ENCODE measurements at regions of chr7 and their contacts with region 1.

Region 1: GRCh38 chr7:140397784-140398750 is at the start of gene SLC37A3:
- DNase-seq: peak; percentile 74
- H3K4me3 ChIP-seq: peak within 1 kb of the TSS; percentile 68 to 100 (median 86)
- H3K27ac ChIP-seq: peak within 1 kb of the TSS; percentile 60
- H3K4me1 ChIP-seq: peaks cover 18% of the 10 kb centered on the region
- H3K27me3 ChIP-seq: no peaks in the 10 kb centered on the region
- CTCF ChIP-seq: no peak
- POLR2A ChIP-seq: peak; percentile 82
- total RNA-seq, gene SLC37A3: 32.7 and 35.3 TPM in 2 replicates

Region 2: GRCh38 chr7:140349144-140349771 is 48.8 kb before region 1 on chr7:
- CTCF ChIA-PET with region 1: no interaction called
- POLR2A ChIA-PET with region 1: no interaction called
- dilution Hi-C with region 1: no loop called
- intact Hi-C with region 1: loop called (anchors 2 kb)
- DNase-seq: peak; percentile 80
- H3K4me3 ChIP-seq: peak overlapping the region in 1 of 3 experiments; percentile 37
- H3K27ac ChIP-seq: peak overlapping the region; percentile 89
- H3K4me1 ChIP-seq: peaks cover 18% of the 10 kb centered on the region
- H3K27me3 ChIP-seq: no peaks in the 10 kb centered on the region
- CTCF ChIP-seq: no peak
- POLR2A ChIP-seq: no peak

Region 3: DNA sequence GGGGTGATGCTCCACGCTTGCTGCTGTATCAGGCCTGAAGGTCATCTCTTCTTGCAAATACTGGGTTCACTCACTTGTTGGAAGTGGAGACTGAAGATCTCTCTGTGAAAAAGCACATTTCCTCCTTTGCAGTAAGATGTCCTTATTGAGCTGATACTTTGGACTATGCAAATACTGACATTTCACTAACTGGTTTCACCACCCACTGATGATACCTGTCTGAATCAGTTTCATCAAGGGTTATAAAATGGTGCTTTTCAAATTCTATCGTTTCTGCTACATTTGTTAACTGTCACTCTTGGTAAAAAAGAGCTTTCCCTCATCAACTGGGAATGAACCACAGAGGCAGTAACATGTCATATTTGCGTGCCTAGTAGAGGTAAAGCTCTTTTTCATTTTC is 41.3 kb after region 1 on chr7:
- CTCF ChIA-PET with region 1: interaction called, 3 read pairs
- POLR2A ChIA-PET with region 1: no interaction called
- dilution Hi-C with region 1: no loop called
- intact Hi-C with region 1: loop called (anchors 5 kb)
- DNase-seq: no peak
- H3K4me3 ChIP-seq: no peak overlapping the region
- H3K27ac ChIP-seq: no peak overlapping the region
- H3K4me1 ChIP-seq: no peaks in the 10 kb centered on the region
- H3K27me3 ChIP-seq: peaks cover 0 to 2% of the 10 kb centered on the region in 2 experiments
- CTCF ChIP-seq: no peak
- POLR2A ChIP-seq: no peak

Region 4: DNA sequence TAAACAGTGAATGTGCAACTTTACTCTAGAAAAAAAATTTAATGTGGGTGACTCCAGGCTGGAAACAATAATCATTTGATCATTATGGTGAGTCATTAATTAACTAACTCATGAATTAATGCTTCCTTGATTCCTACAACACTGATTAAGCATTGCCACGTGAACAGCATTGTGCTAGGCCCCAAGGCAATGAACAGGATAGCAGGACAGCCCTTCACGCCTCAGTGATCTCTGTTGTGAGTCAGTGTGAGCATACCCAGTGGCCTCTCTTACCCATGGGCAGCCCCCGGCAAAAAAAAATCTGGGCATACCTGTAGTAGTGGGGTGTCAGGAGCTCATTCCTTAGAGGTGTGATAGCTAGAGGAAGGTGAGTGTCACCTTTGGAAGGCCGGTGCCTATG is 166.6 kb after region 1 on chr7:
- CTCF ChIA-PET with region 1: no interaction called
- POLR2A ChIA-PET with region 1: no interaction called
- dilution Hi-C with region 1: no loop called
- intact Hi-C with region 1: no loop called
- DNase-seq: no peak
- H3K4me3 ChIP-seq: no peak overlapping the region
- H3K27ac ChIP-seq: no peak overlapping the region
- H3K4me1 ChIP-seq: no peaks in the 10 kb centered on the region
- H3K27me3 ChIP-seq: no peaks in the 10 kb centered on the region
- CTCF ChIP-seq: no peak
- POLR2A ChIP-seq: no peak

Measured in endothelial cell of umbilical vein (primary cell).